ENCODE measurements at regions of chr7 and their contacts with region 1.

Region 1: DNA sequence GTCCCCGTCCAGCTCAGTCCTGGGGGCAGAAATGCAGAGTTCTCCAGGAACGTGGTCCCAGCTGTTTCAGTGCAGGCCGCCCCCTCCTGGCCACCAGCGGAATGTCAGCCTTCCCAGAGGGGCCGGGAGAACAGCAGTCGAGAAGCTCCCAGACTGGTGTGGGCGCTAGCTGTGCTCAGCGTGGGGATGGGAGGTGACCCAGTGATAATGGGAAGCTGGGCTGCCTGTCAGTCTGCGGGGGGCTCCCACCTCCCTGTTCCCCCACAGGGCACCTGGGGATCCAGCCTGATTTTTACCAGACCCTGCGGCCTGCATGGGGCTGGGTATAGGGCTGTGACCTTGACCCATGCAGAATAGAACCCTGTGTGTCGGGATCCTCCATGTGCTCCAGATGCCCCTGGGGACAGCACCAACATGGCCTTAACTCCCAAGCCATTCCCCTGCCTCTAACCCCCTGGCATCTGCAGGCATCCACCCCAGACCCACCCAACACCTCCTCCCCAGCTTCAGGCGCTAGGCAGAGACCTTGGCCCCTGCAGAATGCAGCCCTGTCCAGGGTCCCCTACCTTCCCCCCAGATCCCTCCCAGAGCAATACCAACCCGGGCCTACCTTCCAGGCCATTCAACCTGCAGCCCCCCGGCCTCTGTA is 946 bp upstream of the ELN start:
- DNase-seq: no peak
- H3K4me3 ChIP-seq: no peak overlapping the region
- CTCF ChIP-seq: peak; percentile 97

Region 2: GRCh38 chr7:73856941-73857340 is 170.1 kb before region 1 on chr7:
- CTCF ChIA-PET with region 1: interaction called, 29 read pairs
- POLR2A ChIA-PET with region 1: no interaction called
- DNase-seq: no peak
- H3K4me3 ChIP-seq: no peak overlapping the region
- CTCF ChIP-seq: no peak

Region 3: DNA sequence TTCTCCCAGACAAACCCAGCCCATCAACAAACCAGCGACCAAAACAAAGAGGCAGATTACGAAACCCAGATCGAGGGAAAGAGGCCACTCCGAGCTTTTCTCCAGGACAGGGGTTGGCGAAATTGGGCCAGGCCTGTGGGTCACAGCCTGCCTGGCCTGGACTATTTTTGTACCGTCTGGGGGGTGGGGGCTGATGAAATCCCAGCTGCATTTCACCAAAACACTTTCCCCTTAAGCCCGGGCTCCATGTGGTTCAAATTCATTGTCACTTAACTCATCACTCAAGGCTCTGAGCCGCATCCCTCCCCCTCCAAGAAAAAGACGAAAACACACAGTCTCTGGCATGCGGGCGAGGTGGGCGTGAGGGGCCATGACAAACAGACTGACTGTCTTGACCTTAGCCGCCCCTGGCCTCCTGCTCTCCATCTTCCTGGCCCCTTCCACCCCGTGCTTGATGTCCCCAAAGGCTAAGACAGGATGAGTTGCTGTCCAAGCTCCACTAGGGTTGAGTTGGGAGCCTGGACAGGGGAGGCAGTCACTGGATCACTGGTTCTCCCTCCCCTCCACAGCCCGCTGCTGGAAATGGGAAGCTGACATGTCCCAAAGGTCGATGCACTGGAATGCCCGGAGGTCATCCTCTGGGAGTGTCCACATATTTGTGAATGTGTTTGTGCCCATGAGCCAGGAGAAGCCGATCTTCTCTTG is 146.9 kb before region 1 on chr7:
- CTCF ChIA-PET with region 1: interaction called, 27 read pairs
- POLR2A ChIA-PET with region 1: no interaction called
- DNase-seq: no peak
- H3K4me3 ChIP-seq: no peak overlapping the region
- CTCF ChIP-seq: no peak

Region 4: DNA sequence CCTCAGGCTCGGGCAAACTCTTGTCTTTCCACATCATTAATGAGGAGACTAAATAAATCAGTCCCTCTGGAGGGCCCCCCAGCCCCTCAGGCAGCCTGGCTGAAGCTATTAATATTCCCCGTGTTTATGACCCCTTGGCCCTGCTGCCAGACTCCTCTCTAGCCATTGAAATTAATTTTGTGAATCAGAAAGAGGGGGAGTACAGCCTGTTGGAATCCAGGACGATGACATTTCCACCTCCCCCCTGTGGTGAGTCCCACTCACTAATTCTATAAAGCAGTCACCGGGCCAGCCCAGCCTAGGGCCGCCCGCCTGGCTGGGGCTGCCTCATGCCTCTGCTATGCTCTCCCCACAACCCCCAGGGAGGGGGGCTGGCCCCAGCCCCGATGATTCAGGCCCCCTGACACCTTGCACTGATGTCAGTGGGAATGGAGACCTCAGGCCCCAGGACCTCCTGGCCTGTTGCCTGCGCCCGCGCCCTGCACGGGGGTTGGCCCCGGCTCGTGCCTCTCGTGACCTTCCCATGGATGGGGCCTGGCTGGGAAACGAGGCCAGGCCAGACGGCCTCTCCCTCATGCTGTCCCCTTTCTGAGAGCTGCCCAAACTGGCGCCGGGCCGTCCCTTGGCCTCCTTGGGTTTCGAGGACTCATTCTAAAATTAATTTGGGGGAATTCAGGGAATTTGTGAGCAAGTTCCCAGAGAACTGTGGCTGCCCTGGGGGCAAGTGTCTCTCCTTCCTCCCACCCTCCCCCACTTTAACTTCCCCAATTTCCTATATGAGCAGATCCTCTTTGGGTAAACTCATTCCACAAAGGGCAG is 132.1 kb before region 1 on chr7:
- CTCF ChIA-PET with region 1: interaction called, 28 read pairs
- POLR2A ChIA-PET with region 1: no interaction called
- DNase-seq: peak; percentile 87
- H3K4me3 ChIP-seq: no peak overlapping the region
- CTCF ChIP-seq: peak; percentile 22

Region 5: DNA sequence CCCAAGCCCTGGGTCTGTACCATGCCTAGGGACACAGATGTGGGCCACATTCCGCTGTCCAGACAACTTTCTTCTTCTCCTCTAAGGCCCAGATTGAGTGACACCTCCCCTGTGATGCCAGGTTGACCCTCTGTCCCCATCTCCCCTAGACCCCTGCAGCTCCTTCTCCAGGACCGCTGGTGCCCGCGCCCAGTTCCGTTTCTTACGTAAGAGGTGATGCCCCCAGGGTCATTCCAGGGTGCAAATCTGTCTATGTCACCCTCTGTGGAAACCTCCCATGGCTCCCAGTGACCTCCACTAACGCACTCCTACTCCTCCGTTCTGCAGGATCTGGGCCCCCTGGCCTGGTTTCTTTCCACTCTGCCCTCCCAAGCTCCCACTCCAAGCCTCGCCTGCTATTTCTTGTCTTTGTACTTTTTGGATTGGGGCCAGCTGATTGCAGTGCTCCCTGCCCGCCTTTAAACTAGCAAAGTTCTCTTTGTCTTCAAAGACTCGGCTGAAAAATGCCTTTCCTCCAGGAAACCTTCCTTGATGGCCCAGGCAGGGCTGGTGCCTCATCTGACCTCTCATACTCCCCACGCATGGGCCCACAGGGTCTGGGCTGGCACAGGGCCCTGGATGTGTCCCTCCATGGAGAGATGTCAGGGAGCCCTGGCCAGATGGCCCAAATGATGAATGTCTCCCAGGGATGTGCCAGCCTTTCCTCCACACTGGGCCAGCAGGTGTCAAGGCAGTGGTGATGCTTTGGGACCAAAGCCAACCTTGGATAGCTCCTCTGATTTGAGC is 20.4 kb before region 1 on chr7:
- CTCF ChIA-PET with region 1: interaction called, 147 read pairs
- POLR2A ChIA-PET with region 1: no interaction called
- DNase-seq: no peak
- H3K4me3 ChIP-seq: no peak overlapping the region
- CTCF ChIP-seq: no peak

Region 6: GRCh38 chr7:74043523-74043951 is 16.5 kb after region 1 on chr7:
- CTCF ChIA-PET with region 1: interaction called, 108 read pairs
- POLR2A ChIA-PET with region 1: no interaction called
- DNase-seq: no peak
- H3K4me3 ChIP-seq: no peak overlapping the region
- CTCF ChIP-seq: no peak

Region 7: DNA sequence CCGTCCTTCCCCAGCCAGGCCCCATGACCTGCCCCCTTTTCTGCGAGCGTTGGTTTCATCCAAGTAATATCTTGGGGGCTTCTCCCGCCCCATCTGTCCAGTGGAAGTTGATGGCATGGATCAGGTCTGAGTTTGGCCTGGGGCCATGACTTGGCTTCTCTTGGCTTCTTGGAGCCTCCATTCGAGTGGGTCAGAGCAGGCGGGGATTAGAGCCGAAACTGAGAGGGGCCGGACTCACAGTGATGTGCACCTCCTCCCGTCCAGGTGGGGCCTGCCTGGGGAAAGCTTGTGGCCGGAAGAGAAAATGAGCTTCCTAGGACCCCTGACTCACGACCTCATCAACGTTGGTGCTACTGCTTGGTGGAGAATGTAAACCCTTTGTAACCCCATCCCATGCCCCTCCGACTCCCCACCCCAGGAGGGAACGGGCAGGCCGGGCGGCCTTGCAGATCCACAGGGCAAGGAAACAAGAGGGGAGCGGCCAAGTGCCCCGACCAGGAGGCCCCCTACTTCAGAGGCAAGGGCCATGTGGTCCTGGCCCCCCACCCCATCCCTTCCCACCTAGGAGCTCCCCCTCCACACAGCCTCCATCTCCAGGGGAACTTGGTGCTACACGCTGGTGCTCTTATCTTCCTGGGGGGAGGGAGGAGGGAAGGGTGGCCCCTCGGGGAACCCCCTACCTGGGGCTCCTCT is 41.5 kb after region 1 on chr7:
- CTCF ChIA-PET with region 1: interaction called, 11 read pairs
- POLR2A ChIA-PET with region 1: no interaction called
- DNase-seq: no peak
- H3K4me3 ChIP-seq: no peak overlapping the region
- CTCF ChIP-seq: no peak

Region 8: GRCh38 chr7:74514131-74514591 is 487.1 kb after region 1 on chr7:
- CTCF ChIA-PET with region 1: no interaction called
- POLR2A ChIA-PET with region 1: no interaction called
- DNase-seq: no peak
- H3K4me3 ChIP-seq: no peak overlapping the region
- CTCF ChIP-seq: no peak

Measured in AG04449 (cell line).